Calu3 (cell line): ENCODE measurements at regions of chr10 and their contacts with region 1.

Region 1: GRCh38 chr10:111360260-111360925 is 283.6 kb downstream of the ADRA2A start:
- DNase-seq: peak; percentile 59
- H3K4me3 Mint-ChIP-seq: no peak overlapping the region
- H3K27ac Mint-ChIP-seq: no peak overlapping the region
- H3K4me1 Mint-ChIP-seq: peaks cover 8% of the 10 kb centered on the region
- H3K27me3 Mint-ChIP-seq: no peaks in the 10 kb centered on the region
- CTCF ChIP-seq: peak; percentile 47

Region 2: GRCh38 chr10:110746254-110746826 is 614.1 kb before region 1 on chr10:
- CTCF ChIA-PET with region 1: no interaction called
- intact Hi-C with region 1: loop called (anchors 5 kb)
- DNase-seq: peak; percentile 64
- H3K4me3 Mint-ChIP-seq: no peak overlapping the region
- H3K27ac Mint-ChIP-seq: no peak overlapping the region
- H3K4me1 Mint-ChIP-seq: no peaks in the 10 kb centered on the region
- H3K27me3 Mint-ChIP-seq: peaks cover 27% of the 10 kb centered on the region
- CTCF ChIP-seq: peak; percentile 55

Region 3: DNA sequence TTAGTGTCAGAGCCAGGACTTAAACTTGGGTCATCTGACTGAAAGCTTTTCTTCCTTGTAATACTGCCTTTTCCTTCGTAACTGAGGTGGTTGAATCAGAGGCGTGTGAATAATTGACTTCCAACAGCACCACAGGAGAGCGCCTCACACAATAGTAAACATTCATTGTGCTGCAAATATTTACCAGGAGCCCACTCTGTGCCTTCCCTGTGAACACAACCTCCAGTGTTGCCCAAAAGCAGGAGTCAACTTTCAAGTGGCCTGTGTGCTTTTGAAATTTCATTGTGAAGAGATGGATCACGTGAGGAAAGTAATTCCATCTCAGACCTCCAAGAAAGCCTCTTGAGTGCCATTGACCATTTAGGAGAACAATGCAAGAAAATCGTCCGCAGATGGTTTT is 223.4 kb before region 1 on chr10:
- CTCF ChIA-PET with region 1: no interaction called
- intact Hi-C with region 1: loop called (anchors 5 kb)
- DNase-seq: peak; percentile 36
- H3K4me3 Mint-ChIP-seq: peak overlapping the region; percentile 26
- H3K27ac Mint-ChIP-seq: peak overlapping the region; percentile 81
- H3K4me1 Mint-ChIP-seq: peaks cover 13% of the 10 kb centered on the region
- H3K27me3 Mint-ChIP-seq: no peaks in the 10 kb centered on the region
- CTCF ChIP-seq: no peak

Region 4: DNA sequence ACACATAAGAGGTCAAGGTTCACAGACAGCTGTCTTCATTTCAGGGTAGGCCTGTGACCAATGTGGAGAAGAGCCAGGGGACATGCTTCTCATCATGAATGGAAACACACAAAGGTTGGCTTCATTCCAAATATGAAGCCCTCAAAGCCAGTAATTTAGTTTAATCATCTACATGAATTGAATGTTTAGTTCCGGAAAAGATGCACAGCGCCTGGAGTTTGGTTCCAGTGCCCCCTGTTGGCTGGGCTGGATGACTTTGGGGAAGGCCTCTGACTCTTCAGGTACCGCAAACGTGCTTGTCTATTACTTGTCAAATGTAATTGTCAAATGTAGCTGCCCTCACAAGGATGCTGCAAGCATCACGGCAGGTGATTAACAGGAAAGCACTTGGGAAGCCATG is 152.9 kb before region 1 on chr10:
- CTCF ChIA-PET with region 1: no interaction called
- intact Hi-C with region 1: loop called (anchors 1 kb)
- DNase-seq: peak; percentile 51
- H3K4me3 Mint-ChIP-seq: no peak overlapping the region
- H3K27ac Mint-ChIP-seq: no peak overlapping the region
- H3K4me1 Mint-ChIP-seq: peaks cover 9% of the 10 kb centered on the region
- H3K27me3 Mint-ChIP-seq: no peaks in the 10 kb centered on the region
- CTCF ChIP-seq: peak; percentile 35

Region 5: GRCh38 chr10:111281516-111281915 is 78.9 kb before region 1 on chr10:
- CTCF ChIA-PET with region 1: no interaction called
- intact Hi-C with region 1: loop called (anchors 1 kb)
- DNase-seq: peak; percentile 19
- H3K4me3 Mint-ChIP-seq: no peak overlapping the region
- H3K27ac Mint-ChIP-seq: no peak overlapping the region
- H3K4me1 Mint-ChIP-seq: no peaks in the 10 kb centered on the region
- H3K27me3 Mint-ChIP-seq: peaks cover 13% of the 10 kb centered on the region
- CTCF ChIP-seq: no peak

Region 6: DNA sequence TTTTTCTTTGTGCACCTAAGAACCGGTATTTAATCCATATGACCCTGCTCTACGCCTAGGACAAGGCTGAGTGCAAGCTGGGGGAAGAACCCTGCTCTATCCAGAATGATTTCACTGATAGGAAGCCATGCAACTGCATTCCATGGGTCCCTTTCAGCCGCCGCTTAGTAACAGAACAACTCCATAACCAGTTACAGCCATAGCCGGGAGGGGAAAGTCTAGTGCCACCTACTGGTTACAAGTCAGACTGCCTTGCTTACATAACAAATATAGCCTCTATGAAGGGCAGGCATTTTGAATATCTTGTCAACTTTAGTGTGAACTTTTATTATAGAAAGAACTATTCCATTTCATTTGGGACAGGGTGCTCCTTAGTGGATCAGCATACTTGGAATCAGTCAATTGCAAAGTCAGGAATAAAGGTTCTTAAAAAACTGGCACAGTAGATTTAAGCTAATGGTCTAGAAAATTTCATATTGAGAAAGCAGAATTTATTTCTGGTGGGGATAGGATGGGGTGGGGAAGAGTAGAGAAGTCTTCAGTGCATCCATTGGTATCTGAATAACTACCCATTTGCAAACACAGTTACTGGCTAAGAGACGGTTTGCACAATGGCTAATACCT is 238.2 kb after region 1 on chr10:
- CTCF ChIA-PET with region 1: no interaction called
- intact Hi-C with region 1: loop called (anchors 10 kb)
- DNase-seq: peak; percentile 40
- H3K4me3 Mint-ChIP-seq: no peak overlapping the region
- H3K27ac Mint-ChIP-seq: no peak overlapping the region
- H3K4me1 Mint-ChIP-seq: no peaks in the 10 kb centered on the region
- H3K27me3 Mint-ChIP-seq: no peaks in the 10 kb centered on the region
- CTCF ChIP-seq: no peak